Heart left ventricle (tissue), 16 donors: ENCODE measurements at regions of chr17 and their contacts with region 1.

Region 1: GRCh38 chr17:69130627-69131296 is 10.9 kb downstream of the ABCA6 start:
- DNase-seq: no peak
- ATAC-seq: no peak
- H3K4me3 ChIP-seq: no peak overlapping the region
- H3K27ac ChIP-seq: no peak overlapping the region
- H3K4me1 ChIP-seq: no peaks in the 10 kb centered on the region
- H3K27me3 ChIP-seq: no peaks in the 10 kb centered on the region
- CTCF ChIP-seq: no peak
- POLR2A ChIP-seq: no peak

Region 2: GRCh38 chr17:69060822-69061221 is 69.9 kb before region 1 on chr17 and contains the start of gene ABCA9:
- intact Hi-C with region 1: no loop called
- DNase-seq: peak in 2 of 5 donors; percentile 23 to 28
- ATAC-seq: peak; percentile 53 to 88 (median 85)
- H3K4me3 ChIP-seq: peak within 1 kb of the TSS in 9 of 12 donors; percentile 3 to 51 (median 32)
- H3K27ac ChIP-seq: peak within 1 kb of the TSS; percentile 22 to 82 (median 66)
- H3K4me1 ChIP-seq: peaks cover 0 to 46% (median 0%) of the 10 kb centered on the region in 12 donors
- H3K27me3 ChIP-seq: no peaks in the 10 kb centered on the region
- CTCF ChIP-seq: no peak
- POLR2A ChIP-seq: no peak
- total RNA-seq, gene ABCA9: 4.2 to 19.9 (median 11.4) TPM

Region 3: DNA sequence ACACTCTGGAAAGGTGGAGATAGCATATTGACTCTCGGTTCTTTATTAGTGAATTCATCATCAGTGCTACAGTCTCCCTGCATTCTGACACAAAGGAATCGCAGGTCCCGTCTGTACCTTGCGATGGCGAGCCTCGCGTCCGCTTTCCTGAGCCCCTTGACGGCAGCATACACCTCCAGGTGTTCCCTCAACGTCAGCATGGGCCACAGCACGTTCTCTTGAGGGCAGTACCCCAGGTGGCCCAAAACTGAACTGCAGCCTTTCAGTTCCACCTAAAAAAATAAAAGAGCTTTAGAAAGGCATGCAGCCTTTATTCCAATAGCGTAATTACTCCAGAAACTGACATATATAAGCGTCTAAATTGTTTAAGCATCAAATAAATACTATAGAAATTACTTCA is 45.9 kb before region 1 on chr17:
- intact Hi-C with region 1: loop called in 1 of 10 experiments (anchors 10 kb)
- DNase-seq: no peak
- ATAC-seq: no peak
- H3K4me3 ChIP-seq: no peak overlapping the region
- H3K27ac ChIP-seq: no peak overlapping the region
- H3K4me1 ChIP-seq: no peaks in the 10 kb centered on the region
- H3K27me3 ChIP-seq: no peaks in the 10 kb centered on the region
- CTCF ChIP-seq: peak in 6 of 12 donors; percentile 9 to 27 (median 16)
- POLR2A ChIP-seq: no peak